ENCODE measurements at regions of chr1 and their contacts with region 1.

Region 1: GRCh38 chr1:150808121-150808520 is at the start of gene CTSK:
- DNase-seq: peak; percentile 70
- H3K4me3 ChIP-seq: peak within 1 kb of the TSS; percentile 20 to 33 (median 30)
- H3K27ac ChIP-seq: peak within 1 kb of the TSS; percentile 45 to 51 (median 50)
- H3K4me1 ChIP-seq: peaks cover 0 to 17% (median 8%) of the 10 kb centered on the region in 4 donors
- H3K27me3 ChIP-seq: no peaks in the 10 kb centered on the region
- CTCF ChIP-seq: no peak
- EP300 ChIP-seq: no peak
- POLR2A ChIP-seq: no peak
- total RNA-seq, gene CTSK: 33.5 to 114 (median 82.7) TPM

Region 2: GRCh38 chr1:150846473-150847146 is 38.5 kb after region 1 on chr1:
- intact Hi-C with region 1: loop called (anchors 10 kb)
- DNase-seq: no peak
- H3K4me3 ChIP-seq: no peak overlapping the region
- H3K27ac ChIP-seq: no peak overlapping the region
- H3K4me1 ChIP-seq: no peaks in the 10 kb centered on the region
- H3K27me3 ChIP-seq: no peaks in the 10 kb centered on the region
- CTCF ChIP-seq: no peak
- EP300 ChIP-seq: no peak
- POLR2A ChIP-seq: no peak

Measured in sigmoid colon (tissue), 7 donors.